ENCODE measurements at regions of chr17 and their contacts with region 1.

Region 1: DNA sequence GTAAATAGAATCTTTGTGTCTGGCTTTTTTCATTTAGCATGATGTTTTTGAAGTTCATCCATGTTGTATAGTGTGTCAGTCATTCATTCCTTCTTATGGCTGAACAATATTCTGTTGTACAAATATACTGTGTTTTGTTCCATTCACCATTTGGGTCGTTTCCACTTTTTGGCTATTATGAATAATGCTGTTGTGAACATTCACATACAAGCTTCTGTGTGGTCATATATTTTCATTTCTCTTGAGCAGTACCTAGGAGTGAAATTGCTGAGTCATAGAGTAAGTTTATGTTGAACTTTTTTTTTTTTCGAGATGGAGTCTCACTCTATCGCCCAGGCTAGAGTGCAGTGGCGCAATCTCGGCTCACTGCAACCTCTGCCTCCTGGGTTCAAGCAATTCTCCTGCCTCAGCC is 32.3 kb upstream of the TAOK1 start:
- DNase-seq: no peak
- H3K4me3 ChIP-seq: no peak overlapping the region
- H3K27ac ChIP-seq: peak overlapping the region; percentile 44
- H3K4me1 ChIP-seq: peaks cover 6% of the 10 kb centered on the region
- H3K27me3 ChIP-seq: no peaks in the 10 kb centered on the region
- CTCF ChIP-seq: no peak

Region 2: GRCh38 chr17:28917465-28917864 is 440.4 kb before region 1 on chr17:
- CTCF ChIA-PET with region 1: interaction called, 11 read pairs
- POLR2A ChIA-PET with region 1: no interaction called
- intact Hi-C with region 1: no loop called
- DNase-seq: no peak
- H3K4me3 ChIP-seq: no peak overlapping the region
- H3K27ac ChIP-seq: no peak overlapping the region
- H3K4me1 ChIP-seq: no peaks in the 10 kb centered on the region
- H3K27me3 ChIP-seq: no peaks in the 10 kb centered on the region
- CTCF ChIP-seq: no peak

Region 3: DNA sequence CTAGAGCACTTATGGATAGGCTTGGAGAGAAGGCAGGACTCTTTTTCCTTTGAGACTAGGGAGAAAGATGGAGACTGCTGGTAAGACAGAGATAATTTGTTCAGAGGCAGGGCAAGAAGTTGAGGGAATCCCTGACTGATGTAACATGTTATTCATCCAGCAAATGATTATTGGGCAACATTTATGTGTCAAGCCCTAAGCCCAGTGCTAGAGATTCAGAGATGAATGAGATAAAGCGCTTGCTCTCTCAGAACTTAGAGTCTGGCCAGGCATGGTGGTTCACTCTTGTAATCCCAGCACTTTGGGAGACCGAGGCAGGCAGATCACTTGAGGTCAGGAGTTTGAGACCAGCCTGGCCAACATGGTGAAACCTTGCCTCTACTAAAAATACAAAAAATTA is 16.1 kb before region 1 on chr17:
- CTCF ChIA-PET with region 1: no interaction called
- POLR2A ChIA-PET with region 1: no interaction called
- intact Hi-C with region 1: no loop called
- DNase-seq: no peak
- H3K4me3 ChIP-seq: no peak overlapping the region
- H3K27ac ChIP-seq: no peak overlapping the region
- H3K4me1 ChIP-seq: no peaks in the 10 kb centered on the region
- H3K27me3 ChIP-seq: no peaks in the 10 kb centered on the region
- CTCF ChIP-seq: no peak